ENCODE measurements at regions of chr4 and their contacts with region 1.

Region 1: GRCh38 chr4:99405433-99406115 is 29.6 kb downstream of the ADH7 start:
- DNase-seq: peak; percentile 84
- H3K4me3 ChIP-seq: no peak overlapping the region
- H3K27ac ChIP-seq: peak overlapping the region; percentile 69 to 81 (median 79)
- H3K4me1 ChIP-seq: peaks cover 4 to 33% (median 21%) of the 10 kb centered on the region in 4 donors
- H3K27me3 ChIP-seq: no peaks in the 10 kb centered on the region
- CTCF ChIP-seq: peak; percentile 92 to 97 (median 95)
- EP300 ChIP-seq: no peak
- POLR2A ChIP-seq: no peak

Region 2: DNA sequence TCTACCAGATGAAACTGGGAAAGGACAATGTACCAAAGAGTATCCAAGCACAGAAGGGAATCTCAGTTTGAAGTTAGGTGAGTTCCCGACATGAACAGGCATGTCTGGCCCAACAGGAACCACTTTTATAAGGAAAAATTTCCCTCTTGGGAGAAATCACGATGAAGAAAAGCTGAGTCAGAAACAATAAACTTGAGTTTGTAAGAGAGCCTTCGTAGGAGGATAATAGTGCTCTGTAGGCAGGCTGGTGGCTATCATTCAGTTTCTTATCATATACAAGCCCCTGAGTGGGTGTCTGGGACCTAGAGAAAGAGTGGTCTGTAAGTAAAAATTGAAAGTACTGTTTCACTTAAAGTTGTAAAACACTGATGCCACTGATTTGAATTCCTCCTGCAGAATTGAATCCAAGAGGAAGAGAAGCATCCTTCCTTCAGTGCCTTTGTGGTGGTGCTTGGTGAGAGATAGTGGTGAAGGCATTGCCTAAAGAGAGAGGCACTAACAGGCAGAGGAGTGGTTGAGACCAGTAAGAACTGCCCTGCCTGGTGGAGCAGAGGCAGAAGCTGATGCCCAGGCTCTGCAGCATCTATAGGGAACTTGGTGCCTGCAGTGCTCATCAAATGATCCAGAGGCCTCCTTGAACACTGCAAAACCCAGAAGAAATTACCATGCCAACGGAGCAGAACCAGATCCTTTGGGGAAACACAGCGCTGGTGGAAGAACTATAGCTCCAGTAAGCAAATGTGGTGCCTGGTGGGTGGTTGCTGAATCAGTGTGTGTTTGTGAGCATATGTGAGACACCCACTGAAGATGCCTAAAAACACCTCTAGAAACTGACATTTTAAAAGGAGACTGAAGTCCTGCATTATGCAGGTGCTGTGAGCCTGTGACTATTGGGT is 441.8 kb before region 1 on chr4:
- in situ Hi-C with region 1: loop called in 1 of 4 experiments (anchors 25 kb)
- intact Hi-C with region 1: no loop called
- DNase-seq: no peak
- H3K4me3 ChIP-seq: no peak overlapping the region
- H3K27ac ChIP-seq: no peak overlapping the region
- H3K4me1 ChIP-seq: no peaks in the 10 kb centered on the region
- H3K27me3 ChIP-seq: no peaks in the 10 kb centered on the region
- CTCF ChIP-seq: no peak
- EP300 ChIP-seq: no peak
- POLR2A ChIP-seq: no peak

Region 3: DNA sequence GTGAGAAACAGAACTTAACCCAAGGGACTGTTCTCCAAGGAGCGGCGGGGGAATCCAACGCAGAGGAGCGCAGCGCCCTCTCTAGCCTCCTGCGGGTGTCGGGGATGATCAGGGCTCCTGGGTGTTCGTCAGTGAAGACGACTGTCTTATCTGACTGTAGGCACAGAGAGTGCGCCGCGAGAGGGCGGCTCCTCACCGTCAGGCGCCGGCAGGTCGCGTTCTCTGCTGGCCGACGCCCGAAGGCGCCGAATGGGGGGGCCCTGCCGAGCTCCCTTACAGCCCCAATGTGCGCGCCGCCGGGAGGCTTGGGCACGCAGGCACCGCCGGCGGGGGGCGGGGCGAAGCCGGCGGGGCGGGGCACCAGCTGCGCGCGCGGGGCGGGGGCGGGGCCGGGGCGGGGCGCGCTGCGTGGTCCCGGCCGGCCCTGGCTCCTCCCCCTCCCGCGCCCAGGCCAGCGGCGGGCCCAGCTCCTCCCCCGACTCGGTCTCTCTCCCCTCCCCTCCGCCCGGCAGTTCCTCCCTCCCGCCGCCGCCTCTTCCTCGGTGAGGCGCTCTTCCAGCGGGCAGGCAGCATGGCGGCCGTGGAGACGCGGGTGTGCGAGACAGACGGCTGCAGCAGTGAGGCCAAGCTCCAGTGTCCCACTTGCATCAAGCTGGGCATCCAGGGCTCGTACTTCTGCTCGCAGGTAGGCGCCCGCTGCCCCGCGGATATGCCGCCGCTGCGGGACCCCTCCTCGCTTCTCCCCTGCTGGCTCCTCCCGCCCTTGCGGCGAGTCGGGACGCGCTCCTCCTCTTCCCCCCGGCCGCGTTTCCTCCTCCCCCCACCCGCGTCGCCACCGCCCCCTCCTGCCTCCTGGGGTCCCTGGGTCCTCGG is 410.2 kb before region 1 on chr4 and contains the start of gene METAP1:
- in situ Hi-C with region 1: loop called in 1 of 4 experiments (anchors 10 kb)
- intact Hi-C with region 1: no loop called
- DNase-seq: peak; percentile 97
- H3K4me3 ChIP-seq: peak within 1 kb of the TSS; percentile 86 to 99 (median 93)
- H3K27ac ChIP-seq: peak within 1 kb of the TSS; percentile 90 to 95 (median 93)
- H3K4me1 ChIP-seq: peaks cover 6 to 30% (median 19%) of the 10 kb centered on the region in 4 donors
- H3K27me3 ChIP-seq: no peaks in the 10 kb centered on the region
- CTCF ChIP-seq: peak; percentile 34 to 65 (median 54)
- EP300 ChIP-seq: no peak
- POLR2A ChIP-seq: peak; percentile 80
- total RNA-seq, gene METAP1: 34.8 to 66.1 (median 55.9) TPM

Region 4: GRCh38 chr4:99117876-99118693 is 287.5 kb before region 1 on chr4:
- in situ Hi-C with region 1: loop called (anchors 5 to 25 kb)
- intact Hi-C with region 1: loop called (anchors 5 kb)
- DNase-seq: no peak
- H3K4me3 ChIP-seq: no peak overlapping the region
- H3K27ac ChIP-seq: no peak overlapping the region
- H3K4me1 ChIP-seq: peaks cover 0 to 6% (median 0%) of the 10 kb centered on the region in 4 donors
- H3K27me3 ChIP-seq: no peaks in the 10 kb centered on the region
- CTCF ChIP-seq: peak in 4 of 5 experiments; percentile 33 to 55 (median 36)
- EP300 ChIP-seq: no peak
- POLR2A ChIP-seq: no peak

Region 5: GRCh38 chr4:99205153-99205979 is 200.2 kb before region 1 on chr4:
- in situ Hi-C with region 1: loop called in 2 of 4 experiments (anchors 10 kb)
- intact Hi-C with region 1: loop called (anchors 10 kb)
- DNase-seq: peak; percentile 32
- H3K4me3 ChIP-seq: no peak overlapping the region
- H3K27ac ChIP-seq: peak overlapping the region; percentile 41 to 73 (median 62)
- H3K4me1 ChIP-seq: peaks cover 3 to 45% (median 22%) of the 10 kb centered on the region in 4 donors
- H3K27me3 ChIP-seq: no peaks in the 10 kb centered on the region
- CTCF ChIP-seq: peak in 4 of 5 experiments; percentile 21 to 55 (median 38)
- EP300 ChIP-seq: no peak
- POLR2A ChIP-seq: no peak

Region 6: GRCh38 chr4:99324979-99325378 is 80.6 kb before region 1 on chr4:
- in situ Hi-C with region 1: no loop called
- intact Hi-C with region 1: loop called (anchors 10 kb)
- DNase-seq: peak; percentile 51
- H3K4me3 ChIP-seq: no peak overlapping the region
- H3K27ac ChIP-seq: peak overlapping the region; percentile 64 to 82 (median 74)
- H3K4me1 ChIP-seq: peaks cover 3 to 8% (median 4%) of the 10 kb centered on the region in 4 donors
- H3K27me3 ChIP-seq: no peaks in the 10 kb centered on the region
- CTCF ChIP-seq: no peak
- EP300 ChIP-seq: peak; percentile 56
- POLR2A ChIP-seq: no peak

Measured in transverse colon (tissue), 4 donors.